Panc1 (cell line): ENCODE measurements at regions of chr1 and their contacts with region 1.

Region 1: DNA sequence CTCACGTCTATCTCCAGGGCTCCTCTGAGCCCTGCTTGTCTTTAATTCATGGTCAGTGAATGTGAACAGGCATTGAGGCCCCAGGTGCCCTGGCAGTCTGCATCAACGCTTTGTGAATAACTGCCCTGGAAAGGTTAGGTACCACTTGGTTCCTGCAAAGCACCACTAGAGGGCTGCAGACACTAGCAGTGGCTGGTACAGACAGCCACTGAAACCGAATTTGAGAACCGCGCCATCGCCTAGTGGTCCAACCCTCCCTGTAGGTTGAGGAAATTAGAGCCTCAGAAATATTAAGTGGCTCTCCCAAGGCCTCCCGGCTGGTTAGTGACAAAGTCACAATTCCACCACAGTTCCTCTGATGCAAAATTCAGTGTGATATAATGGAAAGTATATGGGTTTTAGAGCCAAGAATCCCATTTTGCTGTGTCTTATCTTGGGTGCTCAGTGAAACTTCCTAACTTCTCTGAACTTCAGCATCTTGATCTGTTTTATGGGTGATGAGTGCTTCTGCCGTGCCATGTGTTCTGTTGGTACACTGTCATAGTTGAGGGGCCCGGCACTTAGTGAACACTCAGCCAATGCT is 46.2 kb upstream of the BCL9 start:
- DNase-seq: peak; percentile 46
- ATAC-seq: peak; percentile 99
- H3K4me3 ChIP-seq: no peak overlapping the region
- H3K27ac ChIP-seq: no peak overlapping the region
- H3K4me1 ChIP-seq: no peaks in the 10 kb centered on the region
- H3K27me3 ChIP-seq: 0 out of 2 replicates have a peak, but pooled peaks cover under 1% of the 10 kb centered on the region
- CTCF ChIP-seq: peak; percentile 95

Region 2: DNA sequence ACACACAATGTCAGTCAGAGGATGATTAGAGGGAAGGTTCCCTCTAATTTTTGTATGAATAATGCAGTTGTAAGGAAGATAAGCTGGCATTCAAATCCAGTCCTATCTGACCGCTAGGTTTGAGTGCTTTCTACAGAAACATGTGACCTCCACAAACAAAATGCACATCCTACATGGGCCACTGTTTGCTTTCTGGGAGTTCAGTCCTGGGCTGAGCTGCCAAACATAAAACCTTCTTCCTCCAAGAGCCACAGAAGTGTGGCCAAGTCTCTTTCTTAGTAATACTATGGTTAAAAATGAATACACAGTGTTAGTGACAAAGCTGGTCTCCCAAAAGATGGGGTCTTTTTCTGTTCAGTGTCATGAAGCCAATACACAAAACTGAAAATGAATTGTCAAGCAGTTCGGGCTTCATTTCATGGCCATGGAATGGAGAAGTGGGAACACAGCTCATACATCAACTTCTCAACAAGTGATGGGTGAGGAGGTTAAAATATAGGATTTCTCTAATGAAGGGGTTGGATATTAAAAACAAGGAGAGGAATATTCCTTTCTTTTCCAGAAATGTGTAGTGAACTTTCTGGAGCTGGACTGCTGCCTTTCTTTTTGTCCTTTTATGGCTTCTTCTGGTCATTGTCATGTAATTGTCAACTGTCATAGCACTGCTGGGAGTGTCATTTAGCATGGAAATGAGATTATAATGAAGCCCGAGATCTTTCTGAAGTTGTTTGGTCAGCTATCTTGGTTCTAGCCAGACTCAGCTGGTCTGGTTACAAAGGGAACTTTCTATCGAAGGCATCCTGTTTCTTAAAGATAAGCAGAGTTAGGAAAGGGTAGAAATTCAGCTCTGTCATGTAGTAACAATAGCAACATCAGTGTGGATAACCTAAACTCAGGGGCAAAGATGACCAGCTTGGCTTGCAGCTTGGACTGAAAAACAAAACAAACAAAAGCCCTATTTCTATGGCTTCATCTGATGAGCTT is 117.5 kb before region 1 on chr1:
- CTCF ChIA-PET with region 1: no interaction called
- POLR2A ChIA-PET with region 1: no interaction called
- in situ Hi-C with region 1: no loop called
- intact Hi-C with region 1: no loop called
- DNase-seq: no peak
- ATAC-seq: no peak
- H3K4me3 ChIP-seq: no peak overlapping the region
- H3K27ac ChIP-seq: no peak overlapping the region
- H3K4me1 ChIP-seq: no peaks in the 10 kb centered on the region
- H3K27me3 ChIP-seq: no peaks in the 10 kb centered on the region
- CTCF ChIP-seq: no peak

Region 3: GRCh38 chr1:147434921-147435320 is 60.2 kb before region 1 on chr1:
- CTCF ChIA-PET with region 1: no interaction called
- POLR2A ChIA-PET with region 1: no interaction called
- in situ Hi-C with region 1: no loop called
- intact Hi-C with region 1: no loop called
- DNase-seq: no peak
- ATAC-seq: no peak
- H3K4me3 ChIP-seq: no peak overlapping the region
- H3K27ac ChIP-seq: no peak overlapping the region
- H3K4me1 ChIP-seq: no peaks in the 10 kb centered on the region
- H3K27me3 ChIP-seq: no peaks in the 10 kb centered on the region
- CTCF ChIP-seq: no peak

Region 4: GRCh38 chr1:147472966-147473734 is 21.9 kb before region 1 on chr1:
- CTCF ChIA-PET with region 1: no interaction called
- POLR2A ChIA-PET with region 1: no interaction called
- in situ Hi-C with region 1: no loop called
- intact Hi-C with region 1: no loop called
- DNase-seq: no peak
- ATAC-seq: no peak
- H3K4me3 ChIP-seq: no peak overlapping the region
- H3K27ac ChIP-seq: no peak overlapping the region
- H3K4me1 ChIP-seq: no peaks in the 10 kb centered on the region
- H3K27me3 ChIP-seq: no peaks in the 10 kb centered on the region; the same call in 1 of the 2 replicates
- CTCF ChIP-seq: no peak

Region 5: DNA sequence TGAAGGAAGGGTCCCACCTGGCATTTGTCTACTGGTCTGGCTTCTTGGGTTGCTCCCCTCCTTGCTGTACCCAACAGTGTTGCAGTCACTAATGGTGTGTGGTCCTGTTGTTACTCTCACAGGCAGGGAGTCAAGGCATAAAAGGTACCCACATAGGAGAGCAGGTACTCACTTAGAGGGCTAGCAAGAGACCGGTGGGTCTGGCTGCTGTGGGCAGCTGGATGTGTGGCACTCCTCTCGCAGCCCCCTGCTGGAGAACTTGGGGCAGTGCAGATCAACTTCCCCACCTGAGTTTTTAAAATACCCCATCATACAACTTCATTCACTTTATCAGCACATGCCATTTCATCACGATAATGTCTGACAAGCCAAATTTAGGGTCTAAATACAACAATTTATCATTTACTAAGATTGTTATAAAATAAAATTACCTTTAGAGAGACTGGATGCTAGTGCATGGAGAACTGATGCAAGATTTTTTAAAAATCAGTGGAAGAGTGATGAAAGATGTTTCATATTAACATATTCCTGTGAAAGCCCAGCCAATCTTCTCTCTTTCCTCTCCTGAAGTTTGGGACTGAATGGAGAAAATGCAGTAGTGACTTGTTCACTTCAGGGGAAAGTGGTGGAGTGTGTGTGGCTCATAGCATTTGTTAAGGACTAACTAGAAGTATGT is 132.5 kb after region 1 on chr1:
- CTCF ChIA-PET with region 1: no interaction called
- POLR2A ChIA-PET with region 1: no interaction called
- in situ Hi-C with region 1: no loop called
- intact Hi-C with region 1: loop called (anchors 5 kb)
- DNase-seq: peak; percentile 51
- ATAC-seq: peak; percentile 90
- H3K4me3 ChIP-seq: no peak overlapping the region
- H3K27ac ChIP-seq: no peak overlapping the region
- H3K4me1 ChIP-seq: no peaks in the 10 kb centered on the region
- H3K27me3 ChIP-seq: no peaks in the 10 kb centered on the region
- CTCF ChIP-seq: peak; percentile 94